ENCODE measurements at regions of chr1 and their contacts with region 1.

Region 1: DNA sequence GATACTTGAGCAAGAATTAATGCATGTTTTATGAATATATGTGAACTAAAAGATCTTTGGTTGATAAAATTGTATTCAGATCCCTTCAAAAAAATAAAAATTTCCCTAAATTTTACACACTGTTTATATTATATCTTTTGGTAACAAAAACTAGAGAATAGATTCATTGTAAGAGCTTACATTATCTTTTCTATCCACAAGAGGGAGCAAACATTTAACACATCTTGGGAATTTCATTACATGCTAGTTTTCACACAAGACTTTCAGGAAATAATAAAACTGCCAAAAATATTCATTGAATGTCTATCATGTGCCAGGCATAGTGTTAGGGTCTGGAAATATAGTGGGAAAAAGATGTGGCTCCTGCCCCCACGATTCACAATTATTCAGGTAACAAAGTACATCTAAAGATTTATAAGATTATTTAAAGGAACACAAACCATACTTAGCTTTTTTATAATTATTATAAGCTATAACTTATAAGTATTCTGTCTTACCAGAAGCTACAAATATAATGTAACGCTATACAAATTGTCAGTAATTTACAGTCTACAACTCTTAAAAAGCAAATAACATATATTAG is 30.6 kb downstream of the FAF1 start:
- DNase-seq: no peak
- H3K4me3 Mint-ChIP-seq: no peak overlapping the region
- H3K27ac Mint-ChIP-seq: no peak overlapping the region
- H3K4me1 Mint-ChIP-seq: peaks cover 22% of the 10 kb centered on the region
- H3K27me3 Mint-ChIP-seq: no peaks in the 10 kb centered on the region

Region 2: DNA sequence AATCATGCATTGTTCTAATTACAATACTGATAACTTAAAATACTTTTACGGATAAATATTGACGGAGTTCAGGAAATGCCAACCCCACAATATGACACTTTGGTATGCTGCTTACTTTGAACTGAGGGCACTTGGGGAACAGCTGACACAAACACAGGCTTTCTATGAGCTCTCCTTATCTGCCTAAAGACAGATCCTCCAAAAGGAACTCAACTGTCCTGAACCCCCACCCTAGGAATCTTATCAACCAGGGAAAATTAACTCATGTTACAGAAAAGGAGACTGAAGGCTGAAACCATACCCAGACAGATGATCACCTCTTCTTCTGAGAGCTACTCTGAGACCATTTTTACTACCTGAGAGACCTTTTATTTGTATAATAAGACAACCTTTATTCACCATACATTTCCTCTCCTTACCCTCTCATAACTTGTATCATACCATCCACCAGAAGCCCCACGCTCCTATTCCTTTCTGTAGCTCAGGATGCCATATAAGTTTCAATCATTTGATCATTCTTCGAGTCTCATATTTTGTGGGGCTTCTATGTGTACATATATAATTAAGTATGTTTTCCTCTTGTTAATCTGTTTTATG is 208.9 kb before region 1 on chr1:
- CTCF ChIA-PET with region 1: no interaction called
- intact Hi-C with region 1: no loop called
- DNase-seq: no peak
- H3K4me3 Mint-ChIP-seq: no peak overlapping the region
- H3K27ac Mint-ChIP-seq: no peak overlapping the region
- H3K4me1 Mint-ChIP-seq: peaks cover 12% of the 10 kb centered on the region
- H3K27me3 Mint-ChIP-seq: no peaks in the 10 kb centered on the region

Region 3: DNA sequence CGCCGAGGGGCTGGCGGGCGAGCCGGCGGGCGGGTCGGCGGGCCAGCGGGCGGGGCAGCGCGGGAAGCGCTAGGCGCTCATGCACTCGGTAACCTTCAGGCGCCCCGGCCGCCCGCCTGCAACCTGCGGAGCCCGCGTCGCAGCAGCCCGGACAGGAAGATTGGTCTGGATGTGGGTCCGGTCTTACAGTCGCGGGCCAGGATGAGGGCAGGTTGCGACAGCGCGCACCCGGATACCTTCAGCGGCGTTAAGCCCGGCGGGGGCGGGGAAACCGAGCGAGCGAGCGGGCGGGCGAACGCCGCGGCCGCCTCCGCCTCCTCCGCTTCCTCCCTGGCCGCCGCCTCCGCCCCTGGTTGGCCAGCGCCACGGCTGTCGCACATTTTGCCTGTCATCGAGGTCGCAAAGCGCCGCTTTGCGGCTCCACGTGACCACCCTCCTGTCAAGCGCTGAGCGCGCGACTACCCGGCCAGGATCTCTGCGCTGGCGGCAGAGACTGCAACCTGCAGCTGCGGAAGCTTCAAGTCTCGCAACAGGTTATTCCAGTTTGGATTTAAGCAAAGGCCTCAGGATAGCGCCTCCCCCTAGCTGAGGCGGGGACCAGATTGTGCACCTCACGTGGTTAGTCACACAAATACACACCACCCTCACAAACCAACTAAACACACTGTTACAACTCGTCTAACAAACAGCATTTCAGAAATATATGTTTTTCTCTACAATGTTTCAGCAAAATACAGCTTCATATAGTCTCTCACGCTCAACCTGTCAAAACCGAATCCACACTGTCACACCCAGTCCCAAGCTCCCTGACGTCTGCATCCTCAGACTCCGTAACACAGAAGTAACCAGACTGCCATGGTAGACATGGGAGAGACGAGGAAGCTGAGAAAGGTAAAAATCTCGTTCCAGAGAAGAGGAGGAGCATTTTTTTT is 30.7 kb after region 1 on chr1 and contains the start of gene FAF1:
- CTCF ChIA-PET with region 1: interaction called, 6 read pairs
- intact Hi-C with region 1: loop called (anchors 2 kb)
- DNase-seq: peak; percentile 97
- H3K4me3 Mint-ChIP-seq: peak within 1 kb of the TSS; percentile 86
- H3K27ac Mint-ChIP-seq: peak within 1 kb of the TSS; percentile 85
- H3K4me1 Mint-ChIP-seq: peaks cover 25% of the 10 kb centered on the region
- H3K27me3 Mint-ChIP-seq: no peaks in the 10 kb centered on the region
- total RNA-seq, gene FAF1: 87.9 to 90.1 TPM

Region 4: DNA sequence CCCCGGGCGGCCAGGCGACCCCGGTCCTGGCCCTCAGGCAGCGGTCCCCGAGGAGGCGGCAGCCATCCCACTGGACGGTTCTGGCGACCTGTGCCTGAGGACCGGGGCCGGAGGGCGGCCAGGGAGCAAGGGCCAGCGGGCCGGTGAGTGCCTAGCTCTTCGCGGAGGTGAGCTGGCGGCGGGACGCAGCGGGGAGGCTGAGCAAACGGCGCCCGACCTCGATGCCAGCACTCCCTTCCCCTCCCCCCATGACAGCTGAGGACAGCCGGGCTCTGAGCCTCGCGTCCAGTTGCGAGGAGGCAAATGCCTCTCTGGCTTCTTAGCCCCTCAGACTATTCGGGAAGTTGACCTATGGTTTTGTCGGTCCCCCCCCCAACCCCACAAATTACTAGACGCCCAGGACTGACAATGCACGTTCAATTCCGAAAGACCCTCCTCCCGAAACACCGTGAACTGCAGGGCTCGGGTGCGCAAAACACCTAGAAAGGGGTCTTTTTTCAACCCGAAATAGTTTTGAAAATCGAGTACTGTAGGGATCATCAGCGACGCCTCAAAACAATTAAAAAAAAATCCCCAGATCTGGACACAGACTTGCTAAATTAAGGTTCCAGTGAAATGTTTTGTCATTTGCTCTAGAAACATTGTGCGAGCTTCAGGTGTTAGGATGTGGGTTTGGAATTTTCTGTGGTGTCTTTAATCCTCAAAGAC is 48.8 kb after region 1 on chr1:
- CTCF ChIA-PET with region 1: interaction called, 7 read pairs
- intact Hi-C with region 1: loop called (anchors 2 kb)
- DNase-seq: peak; percentile 27
- H3K4me3 Mint-ChIP-seq: peak overlapping the region; percentile 62
- H3K27ac Mint-ChIP-seq: no peak overlapping the region
- H3K4me1 Mint-ChIP-seq: peaks cover 18% of the 10 kb centered on the region
- H3K27me3 Mint-ChIP-seq: peaks cover 38% of the 10 kb centered on the region

Region 5: DNA sequence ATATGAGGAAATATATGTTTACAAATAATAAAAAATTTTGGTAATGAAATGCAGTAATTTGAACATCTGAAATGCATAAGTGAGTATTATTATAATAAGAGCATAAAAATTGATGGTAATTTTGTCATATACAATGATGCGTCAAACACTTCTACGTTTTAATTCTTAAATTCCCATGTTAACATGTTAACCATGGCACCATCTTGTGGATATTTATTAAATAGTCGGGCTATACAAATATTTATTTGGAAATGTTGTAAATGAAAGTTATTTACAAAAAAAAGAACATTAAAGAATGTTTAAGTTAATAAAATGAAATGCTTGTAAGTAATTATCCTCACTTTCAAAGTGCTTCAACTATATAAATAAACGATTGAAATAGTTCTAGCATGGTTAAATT is 115.4 kb after region 1 on chr1:
- CTCF ChIA-PET with region 1: interaction called, 4 read pairs
- intact Hi-C with region 1: loop called (anchors 10 kb)
- DNase-seq: no peak
- H3K4me3 Mint-ChIP-seq: no peak overlapping the region
- H3K27ac Mint-ChIP-seq: no peak overlapping the region
- H3K4me1 Mint-ChIP-seq: no peaks in the 10 kb centered on the region
- H3K27me3 Mint-ChIP-seq: no peaks in the 10 kb centered on the region

Measured in activated naive CD4-positive, alpha-beta T cell treated with anti-CD3 and anti-CD28 coated beads for 36 hours (primary cell).